ENCODE measurements at regions of chr1 and their contacts with region 1.

Region 1: DNA sequence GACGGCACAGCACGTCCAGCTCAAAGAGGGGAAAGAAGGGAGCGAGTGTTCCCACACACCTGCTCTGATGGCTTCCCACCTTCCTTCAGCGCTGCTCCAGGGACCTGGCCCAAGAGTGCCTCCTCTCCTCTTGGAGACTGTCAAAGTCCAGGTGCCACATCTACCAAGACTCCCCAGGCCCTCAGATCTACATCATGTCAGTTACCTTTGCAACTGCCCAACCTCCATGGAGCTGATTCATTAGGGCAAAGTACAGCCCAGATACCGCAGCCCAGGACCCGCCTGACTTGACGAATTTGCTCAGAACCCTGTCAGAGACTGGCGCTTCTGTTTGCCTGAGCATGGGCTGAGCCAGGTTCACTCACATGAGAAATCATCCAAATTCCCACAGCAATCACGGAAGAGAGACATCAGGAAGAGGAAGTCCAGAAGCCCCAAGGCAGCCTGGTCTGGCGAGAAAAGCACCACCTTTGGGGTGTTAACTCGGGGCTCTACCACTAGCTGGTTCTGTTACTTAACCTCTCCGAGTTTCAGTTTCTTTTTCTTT is at the start of gene SEC16B:
- DNase-seq: peak; percentile 68 to 87 (median 76)
- ATAC-seq: peak; percentile 90 to 96 (median 91)
- H3K4me3 ChIP-seq: peak within 1 kb of the TSS in 2 of 4 donors; percentile 18 to 26
- H3K27ac ChIP-seq: peak within 1 kb of the TSS; percentile 35 to 81 (median 76)
- H3K4me1 ChIP-seq: peaks cover 13 to 15% (median 15%) of the 10 kb centered on the region in 3 donors
- H3K27me3 ChIP-seq: no peaks in the 10 kb centered on the region
- CTCF ChIP-seq: no peak
- total RNA-seq, gene SEC16B: 2.8 to 7.2 (median 4.0) TPM

Region 2: GRCh38 chr1:177880339-177880891 is 89.5 kb before region 1 on chr1:
- intact Hi-C with region 1: no loop called
- DNase-seq: no peak
- ATAC-seq: no peak
- H3K4me3 ChIP-seq: no peak overlapping the region
- H3K27ac ChIP-seq: no peak overlapping the region
- H3K4me1 ChIP-seq: no peaks in the 10 kb centered on the region
- H3K27me3 ChIP-seq: no peaks in the 10 kb centered on the region
- CTCF ChIP-seq: no peak

Region 3: DNA sequence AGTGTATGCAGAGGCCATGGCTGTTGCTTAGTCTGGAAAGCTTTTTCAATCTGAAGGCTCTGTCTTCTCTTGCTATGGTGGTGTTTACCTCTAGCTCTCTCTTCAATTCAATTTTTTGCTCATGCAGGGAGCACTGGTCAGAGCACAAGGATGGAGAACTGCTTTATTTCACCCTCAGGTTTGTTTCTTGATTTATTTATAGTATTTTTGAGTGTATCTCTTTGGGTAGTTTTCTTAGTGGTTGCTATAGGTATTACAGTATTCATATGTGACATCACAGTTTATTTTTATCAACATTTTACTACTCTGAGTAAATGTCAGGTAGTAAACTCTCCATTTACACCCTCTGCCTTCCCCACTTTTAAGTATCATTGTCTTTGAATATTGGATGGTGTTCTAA is 271.9 kb after region 1 on chr1:
- intact Hi-C with region 1: no loop called
- DNase-seq: no peak
- ATAC-seq: no peak
- H3K4me3 ChIP-seq: no peak overlapping the region
- H3K27ac ChIP-seq: no peak overlapping the region
- H3K4me1 ChIP-seq: no peaks in the 10 kb centered on the region
- H3K27me3 ChIP-seq: no peaks in the 10 kb centered on the region
- CTCF ChIP-seq: peak in 1 of 4 donors; percentile 20

Region 4: GRCh38 chr1:178548107-178548506 is 578.2 kb after region 1 on chr1:
- intact Hi-C with region 1: loop called in 1 of 3 experiments (anchors 5 kb)
- DNase-seq: no peak
- ATAC-seq: no peak
- H3K4me3 ChIP-seq: no peak overlapping the region
- H3K27ac ChIP-seq: no peak overlapping the region
- H3K4me1 ChIP-seq: no peaks in the 10 kb centered on the region
- H3K27me3 ChIP-seq: no peaks in the 10 kb centered on the region
- CTCF ChIP-seq: no peak

Measured in pancreas (tissue), 10 donors.